PC-3 (cell line): ENCODE measurements at regions of chr10 and their contacts with region 1.

Region 1: DNA sequence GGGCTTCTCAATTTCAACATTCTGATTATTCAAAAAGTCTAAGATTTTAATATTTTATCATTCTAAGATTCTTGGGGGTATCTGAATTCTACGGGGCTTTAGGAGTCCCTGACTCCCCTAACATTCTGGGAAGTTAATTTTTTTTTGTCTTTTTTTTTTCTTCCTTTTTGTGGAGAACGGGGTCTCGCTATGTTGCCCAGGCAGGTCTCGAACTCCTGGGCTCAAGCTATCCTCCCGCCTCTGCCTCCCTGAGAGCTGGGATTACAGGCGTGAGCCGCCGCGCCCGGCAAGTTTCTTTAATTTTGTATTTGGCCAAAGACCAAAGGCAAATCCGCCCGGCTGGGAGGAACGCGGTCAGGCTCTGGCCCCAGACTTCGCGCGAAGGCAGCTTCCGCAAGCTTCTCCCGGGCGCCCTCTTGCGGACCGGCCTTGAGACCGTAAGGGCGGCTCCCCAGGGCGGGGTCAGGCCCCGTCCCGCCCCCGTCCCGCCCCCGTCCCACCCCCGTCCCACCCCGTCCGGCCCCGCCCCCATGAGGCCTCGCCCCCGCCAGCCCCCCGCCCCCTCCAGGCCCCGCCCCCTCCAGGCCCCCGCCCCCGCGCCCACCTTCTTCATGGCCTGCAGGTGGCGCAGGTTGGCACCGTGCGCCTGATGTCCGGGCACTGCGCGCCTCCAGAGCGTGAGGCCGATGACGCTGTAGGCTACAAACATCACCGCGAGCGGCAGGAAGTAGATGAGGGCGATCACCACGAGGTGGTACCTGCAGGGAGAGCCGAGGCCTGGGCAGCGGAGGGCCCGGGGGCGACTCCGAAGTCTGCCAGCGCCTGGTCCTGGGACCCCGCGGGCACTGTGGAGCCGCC is 8.2 kb downstream of the TACR2 start:
- DNase-seq: peak; percentile 99
- ATAC-seq: peak; percentile 82
- H3K4me3 ChIP-seq: peak overlapping the region; percentile 42; the same call in 1 of the 2 replicates
- H3K27ac ChIP-seq: peak overlapping the region; percentile 28
- H3K4me1 ChIP-seq: peaks cover 30% of the 10 kb centered on the region
- H3K27me3 ChIP-seq: no peaks in the 10 kb centered on the region
- CTCF ChIP-seq: peak; percentile 61

Region 2: DNA sequence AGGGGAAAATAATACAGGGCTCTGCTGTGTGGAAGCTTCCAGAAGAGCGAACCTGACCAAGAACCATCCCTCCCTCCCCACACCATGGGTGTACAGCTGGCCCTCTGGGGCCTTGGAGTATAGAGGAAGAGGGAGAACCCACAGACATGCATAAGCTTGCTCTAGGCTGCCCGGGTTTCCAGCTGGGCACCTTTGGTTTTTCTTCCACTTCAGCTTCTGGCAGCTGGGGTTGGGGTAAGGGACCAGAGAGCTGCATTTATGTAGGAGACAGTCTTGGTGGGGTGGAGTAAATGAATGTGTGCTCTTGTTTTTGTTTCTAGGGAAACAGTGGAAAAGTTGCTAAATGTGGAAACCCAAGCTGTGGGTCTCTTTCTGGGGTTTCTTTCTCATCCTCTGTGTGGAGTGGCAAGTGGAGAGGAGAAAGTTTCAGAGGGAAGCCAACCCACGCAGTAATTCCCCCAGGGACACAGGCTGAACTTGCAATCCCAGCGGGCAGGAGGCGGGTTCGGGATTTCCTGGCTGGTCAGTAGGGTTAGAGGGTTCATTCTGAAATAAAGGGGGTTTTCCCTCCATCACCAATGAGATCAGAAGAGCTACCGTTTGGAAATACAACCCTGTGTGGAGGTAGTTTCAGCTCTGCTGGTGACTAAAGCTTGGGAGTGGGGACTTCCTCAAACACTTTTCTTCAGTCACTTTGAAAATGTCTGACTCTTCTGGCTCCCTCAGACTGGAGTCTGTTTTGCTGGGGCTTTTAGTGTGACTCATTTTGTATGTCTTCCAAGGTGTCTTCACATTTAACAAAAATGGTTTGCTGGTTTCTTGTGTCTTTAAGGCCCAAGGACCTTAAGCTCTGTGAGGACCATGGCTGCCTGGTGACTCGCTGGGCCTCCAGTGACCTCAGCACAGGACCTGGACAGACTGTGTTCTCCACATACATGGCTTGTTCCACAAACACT is 342.9 kb before region 1 on chr10:
- CTCF ChIA-PET with region 1: no interaction called
- POLR2A ChIA-PET with region 1: no interaction called
- intact Hi-C with region 1: no loop called
- DNase-seq: peak; percentile 59
- ATAC-seq: no peak
- H3K4me3 ChIP-seq: no peak overlapping the region
- H3K27ac ChIP-seq: no peak overlapping the region
- H3K4me1 ChIP-seq: peaks cover 35% of the 10 kb centered on the region
- H3K27me3 ChIP-seq: no peaks in the 10 kb centered on the region
- CTCF ChIP-seq: no peak

Region 3: GRCh38 chr10:69392481-69393000 is 16.0 kb before region 1 on chr10:
- CTCF ChIA-PET with region 1: interaction called, 13 read pairs
- POLR2A ChIA-PET with region 1: no interaction called
- intact Hi-C with region 1: no loop called
- DNase-seq: peak; percentile 99
- ATAC-seq: peak; percentile 89
- H3K4me3 ChIP-seq: no peak overlapping the region
- H3K27ac ChIP-seq: no peak overlapping the region
- H3K4me1 ChIP-seq: peaks cover 17% of the 10 kb centered on the region
- H3K27me3 ChIP-seq: no peaks in the 10 kb centered on the region
- CTCF ChIP-seq: peak; percentile 100

Region 4: GRCh38 chr10:69451209-69451783 is 42.7 kb after region 1 on chr10 and contains the start of gene TSPAN15:
- CTCF ChIA-PET with region 1: interaction called, 13 read pairs
- POLR2A ChIA-PET with region 1: interaction called, 3 read pairs
- intact Hi-C with region 1: loop called (anchors 2 kb)
- DNase-seq: peak; percentile 99
- ATAC-seq: peak; percentile 54
- H3K4me3 ChIP-seq: peak within 1 kb of the TSS; percentile 80
- H3K27ac ChIP-seq: peak within 1 kb of the TSS; percentile 89
- H3K4me1 ChIP-seq: peaks cover 86% of the 10 kb centered on the region
- H3K27me3 ChIP-seq: no peaks in the 10 kb centered on the region
- CTCF ChIP-seq: no peak
- total RNA-seq, gene TSPAN15: 186 and 212 TPM in 2 replicates

Region 5: GRCh38 chr10:69515699-69516259 is 107.2 kb after region 1 on chr10:
- CTCF ChIA-PET with region 1: interaction called, 12 read pairs
- POLR2A ChIA-PET with region 1: no interaction called
- intact Hi-C with region 1: no loop called
- DNase-seq: peak; percentile 92
- ATAC-seq: peak; percentile 96
- H3K4me3 ChIP-seq: no peak overlapping the region
- H3K27ac ChIP-seq: no peak overlapping the region
- H3K4me1 ChIP-seq: no peaks in the 10 kb centered on the region
- H3K27me3 ChIP-seq: no peaks in the 10 kb centered on the region
- CTCF ChIP-seq: peak; percentile 98

Region 6: GRCh38 chr10:69639291-69640195 is 231.0 kb after region 1 on chr10:
- CTCF ChIA-PET with region 1: interaction called, 18 read pairs
- POLR2A ChIA-PET with region 1: no interaction called
- intact Hi-C with region 1: loop called (anchors 1 kb)
- DNase-seq: peak; percentile 87
- ATAC-seq: peak; percentile 67
- H3K4me3 ChIP-seq: no peak overlapping the region
- H3K27ac ChIP-seq: no peak overlapping the region
- H3K4me1 ChIP-seq: peaks cover 10% of the 10 kb centered on the region
- H3K27me3 ChIP-seq: no peaks in the 10 kb centered on the region
- CTCF ChIP-seq: peak; percentile 100